ENCODE measurements at regions of chr17 and their contacts with region 1.

Region 1: GRCh38 chr17:47323382-47324222 is at the start of gene EFCAB13:
- DNase-seq: peak; percentile 86
- ATAC-seq: peak; percentile 84
- H3K4me3 Mint-ChIP-seq: peak within 1 kb of the TSS; percentile 85
- H3K27ac Mint-ChIP-seq: peak within 1 kb of the TSS; percentile 91
- H3K4me1 Mint-ChIP-seq: peaks cover 18% of the 10 kb centered on the region
- H3K27me3 Mint-ChIP-seq: peaks cover 10% of the 10 kb centered on the region
- total RNA-seq, gene EFCAB13: 4.6 to 5.9 TPM

Region 2: GRCh38 chr17:47099987-47100711 is 223.5 kb before region 1 on chr17:
- CTCF ChIA-PET with region 1: no interaction called
- POLR2A ChIA-PET with region 1: no interaction called
- intact Hi-C with region 1: loop called in 1 of 2 experiments (anchors 1 kb)
- DNase-seq: peak; percentile 95
- ATAC-seq: peak; percentile 100
- H3K4me3 Mint-ChIP-seq: peak overlapping the region; percentile 87
- H3K27ac Mint-ChIP-seq: peak overlapping the region; percentile 97
- H3K4me1 Mint-ChIP-seq: peaks cover 19% of the 10 kb centered on the region
- H3K27me3 Mint-ChIP-seq: no peaks in the 10 kb centered on the region

Region 3: GRCh38 chr17:47335101-47335936 is 11.7 kb after region 1 on chr17:
- CTCF ChIA-PET with region 1: interaction called, 3 read pairs
- POLR2A ChIA-PET with region 1: no interaction called
- intact Hi-C with region 1: loop called in 1 of 2 experiments (anchors 1 kb)
- DNase-seq: no peak
- ATAC-seq: no peak
- H3K4me3 Mint-ChIP-seq: no peak overlapping the region
- H3K27ac Mint-ChIP-seq: no peak overlapping the region
- H3K4me1 Mint-ChIP-seq: no peaks in the 10 kb centered on the region
- H3K27me3 Mint-ChIP-seq: no peaks in the 10 kb centered on the region